PC-3 (cell line): ENCODE measurements at regions of chr14 and their contacts with region 1.

Region 1: DNA sequence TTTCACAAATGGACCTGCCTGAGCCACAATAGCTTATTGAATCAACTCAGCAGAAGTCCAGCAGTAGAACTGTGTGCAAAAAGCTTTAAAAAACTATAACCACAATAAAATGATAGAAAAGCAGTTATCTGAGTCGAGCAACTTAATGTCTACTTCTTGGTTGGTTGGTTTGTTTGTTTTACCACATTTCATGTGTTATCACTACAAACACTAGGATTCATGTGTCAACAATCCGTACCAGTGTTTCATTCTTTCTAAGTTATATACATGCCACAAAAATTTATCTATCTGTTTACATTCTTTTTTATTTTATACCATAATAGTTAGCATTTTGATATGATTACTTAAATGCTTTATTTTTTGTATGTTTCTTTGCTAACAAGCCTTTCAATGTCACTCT is 339.0 kb downstream of the KCNH5 start:
- DNase-seq: peak; percentile 7
- ATAC-seq: peak; percentile 90
- H3K4me3 ChIP-seq: no peak overlapping the region
- H3K27ac ChIP-seq: no peak overlapping the region
- H3K4me1 ChIP-seq: no peaks in the 10 kb centered on the region
- H3K27me3 ChIP-seq: peaks cover 18% of the 10 kb centered on the region; the same call in 1 of the 2 replicates
- CTCF ChIP-seq: no peak

Region 2: DNA sequence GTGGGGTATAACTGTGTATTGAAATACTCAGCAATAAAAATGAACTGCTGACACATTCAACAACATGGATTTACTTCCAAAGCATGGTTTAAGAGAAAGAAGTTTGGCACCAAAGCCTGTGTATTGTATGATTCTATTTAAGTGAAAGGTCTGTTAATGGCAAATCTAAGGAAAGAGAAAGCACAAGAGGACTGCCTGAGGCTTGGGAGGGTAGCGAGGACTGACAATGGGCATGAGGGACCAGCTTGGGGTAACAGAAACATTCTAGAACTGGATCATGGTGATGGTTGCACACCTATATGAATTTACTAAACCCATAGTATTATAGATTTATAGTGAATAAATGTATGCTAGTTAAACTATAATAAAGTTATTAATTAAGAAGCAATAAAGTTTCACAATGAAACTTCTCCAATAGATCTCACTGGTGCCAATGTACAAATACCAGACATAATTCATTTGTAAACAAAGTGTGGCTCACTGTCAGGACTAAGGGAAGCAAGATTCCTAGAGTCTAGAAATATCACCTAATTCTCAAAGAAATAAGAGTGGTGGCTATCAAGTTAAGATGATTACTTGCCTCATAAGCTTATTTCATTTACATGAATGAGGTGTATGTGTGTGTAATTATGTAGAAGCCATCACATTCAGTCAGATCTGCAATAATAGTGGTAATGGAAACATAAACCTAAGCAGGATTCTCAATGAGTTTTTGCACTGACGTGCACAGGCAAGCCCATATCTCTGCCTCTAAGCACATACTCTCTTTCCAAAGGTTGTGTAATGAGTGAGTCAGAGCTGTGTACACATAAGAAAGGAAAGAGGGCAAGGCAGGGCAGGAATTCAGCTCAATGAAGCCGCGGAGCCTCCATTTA is 14.4 kb before region 1 on chr14:
- CTCF ChIA-PET with region 1: no interaction called
- POLR2A ChIA-PET with region 1: no interaction called
- intact Hi-C with region 1: loop called (anchors 1 kb)
- DNase-seq: peak; percentile 95
- ATAC-seq: peak; percentile 97
- H3K4me3 ChIP-seq: peak overlapping the region; percentile 47
- H3K27ac ChIP-seq: peak overlapping the region; percentile 76
- H3K4me1 ChIP-seq: peaks cover 35% of the 10 kb centered on the region
- H3K27me3 ChIP-seq: no peaks in the 10 kb centered on the region
- CTCF ChIP-seq: no peak

Region 3: GRCh38 chr14:62939970-62940369 is 233.8 kb after region 1 on chr14:
- CTCF ChIA-PET with region 1: no interaction called
- POLR2A ChIA-PET with region 1: no interaction called
- intact Hi-C with region 1: no loop called
- DNase-seq: no peak
- ATAC-seq: no peak
- H3K4me3 ChIP-seq: no peak overlapping the region
- H3K27ac ChIP-seq: no peak overlapping the region
- H3K4me1 ChIP-seq: no peaks in the 10 kb centered on the region
- H3K27me3 ChIP-seq: peaks cover 40% of the 10 kb centered on the region; the same call in 1 of the 2 replicates
- CTCF ChIP-seq: no peak